HepG2 (cell line): ENCODE measurements at regions of chr16 and their contacts with region 1.

Region 1: GRCh38 chr16:14486520-14487303 is 143.3 kb downstream of the PARN start:
- DNase-seq: peak; percentile 98
- ATAC-seq: peak; percentile 95
- H3K4me3 ChIP-seq: peak overlapping the region; percentile 44 to 62 (median 49)
- H3K27ac ChIP-seq: peak overlapping the region; percentile 78
- H3K4me1 ChIP-seq: peaks cover 71% of the 10 kb centered on the region
- H3K27me3 ChIP-seq: no peaks in the 10 kb centered on the region
- CTCF ChIP-seq: peak; percentile 30; the same call in 1 of the 2 replicates
- EP300 ChIP-seq: peak in 1 of 2 experiments; percentile 74; a peak in 1 of 4 replicates
- POLR2A ChIP-seq: peak; percentile 58 to 87; a peak in 3 of 4 replicates
- RAD21 ChIP-seq: no peak; the same call in 1 of the 2 replicates

Region 2: DNA sequence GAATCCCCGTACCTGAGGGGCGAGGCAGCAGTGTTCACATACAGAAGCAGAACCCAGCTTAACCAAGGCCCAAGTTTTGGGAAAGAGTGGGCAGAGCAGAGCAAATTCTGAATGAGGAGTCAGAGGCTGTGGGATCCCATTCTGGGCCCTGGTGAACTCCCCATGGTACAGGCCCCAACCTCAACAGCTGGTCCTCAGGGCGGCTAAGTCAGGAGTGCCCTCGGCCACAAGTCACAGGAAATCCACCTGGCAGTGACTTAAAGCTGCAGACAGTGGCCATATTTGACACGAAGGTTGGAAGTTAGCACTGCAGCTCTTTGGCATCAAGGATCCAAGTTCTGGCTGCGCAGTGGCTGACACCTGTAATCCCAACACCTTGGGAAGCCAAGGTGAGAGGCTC is 93.8 kb before region 1 on chr16:
- CTCF ChIA-PET with region 1: no interaction called
- POLR2A ChIA-PET with region 1: no interaction called
- in situ Hi-C with region 1: no loop called
- intact Hi-C with region 1: no loop called
- DNase-seq: no peak
- ATAC-seq: no peak
- H3K4me3 ChIP-seq: no peak overlapping the region
- H3K27ac ChIP-seq: no peak overlapping the region
- H3K4me1 ChIP-seq: peaks cover 67% of the 10 kb centered on the region
- H3K27me3 ChIP-seq: no peaks in the 10 kb centered on the region
- CTCF ChIP-seq: no peak
- EP300 ChIP-seq: no peak
- POLR2A ChIP-seq: no peak
- RAD21 ChIP-seq: no peak

Region 3: DNA sequence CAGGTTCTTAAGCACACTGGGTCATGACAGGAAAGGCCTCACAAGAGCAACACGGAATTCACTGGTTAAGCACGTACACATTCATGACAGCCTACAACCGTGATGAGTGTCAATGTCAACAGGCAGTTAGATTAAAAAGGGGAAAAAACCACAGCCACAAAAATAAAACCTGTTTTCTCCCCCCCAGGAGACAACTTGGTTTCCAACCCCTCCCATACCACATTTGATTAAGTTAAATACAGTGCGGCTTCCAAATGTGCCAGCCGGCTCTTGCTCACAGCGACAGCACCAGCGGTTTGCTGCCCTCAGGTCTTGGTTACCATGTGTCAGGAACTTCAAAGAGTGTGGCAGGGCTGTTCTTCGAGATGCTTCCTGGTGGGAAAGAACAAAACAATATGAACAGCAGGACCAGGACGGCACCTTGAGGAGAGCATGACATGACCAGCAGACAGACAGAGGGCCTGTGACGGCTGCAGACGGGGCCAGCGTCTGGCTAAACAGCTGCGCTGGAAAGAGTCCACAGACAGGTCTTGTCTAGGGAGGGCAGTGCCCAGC is 50.2 kb before region 1 on chr16:
- CTCF ChIA-PET with region 1: no interaction called
- POLR2A ChIA-PET with region 1: no interaction called
- in situ Hi-C with region 1: no loop called
- intact Hi-C with region 1: no loop called
- DNase-seq: no peak
- ATAC-seq: no peak
- H3K4me3 ChIP-seq: no peak overlapping the region
- H3K27ac ChIP-seq: no peak overlapping the region
- H3K4me1 ChIP-seq: no peaks in the 10 kb centered on the region
- H3K27me3 ChIP-seq: no peaks in the 10 kb centered on the region
- CTCF ChIP-seq: no peak
- EP300 ChIP-seq: no peak
- POLR2A ChIP-seq: no peak
- RAD21 ChIP-seq: no peak

Region 4: DNA sequence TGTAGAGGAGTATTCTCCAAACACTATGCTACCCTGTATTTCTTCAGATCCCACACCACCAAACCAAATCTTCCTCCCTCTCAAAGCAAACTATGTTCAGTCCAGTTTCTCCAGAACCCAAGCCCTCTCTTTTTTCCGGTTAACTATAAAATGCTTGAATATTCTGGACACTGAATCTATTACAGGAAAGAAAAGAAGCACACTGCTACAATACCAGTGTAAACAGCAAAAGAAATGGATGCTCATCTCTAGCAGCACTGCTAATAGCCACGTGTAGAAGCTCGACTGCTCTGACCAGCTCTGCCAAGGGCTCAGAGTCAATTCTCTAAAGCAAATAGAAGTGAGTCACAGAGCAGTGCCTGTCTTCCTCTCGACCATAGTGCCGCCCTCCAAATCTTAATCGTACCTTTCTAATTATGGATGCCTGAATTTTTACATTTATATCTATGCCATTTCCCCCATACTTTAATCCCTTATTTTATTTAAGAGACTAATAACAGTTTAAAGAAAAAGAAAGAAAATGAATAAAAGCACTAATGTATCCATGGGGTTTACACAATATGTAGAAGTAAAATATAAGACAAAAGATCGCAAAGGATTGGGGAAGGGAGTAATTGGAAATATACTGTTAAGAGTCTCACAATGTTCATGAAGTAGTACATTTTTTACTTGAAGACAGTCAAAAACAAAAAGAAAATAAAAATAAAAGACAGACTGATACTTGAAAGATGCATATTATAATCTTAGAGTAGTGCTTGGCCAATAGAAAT is 11.2 kb before region 1 on chr16:
- CTCF ChIA-PET with region 1: no interaction called
- POLR2A ChIA-PET with region 1: interaction called, 18 read pairs
- in situ Hi-C with region 1: no loop called
- intact Hi-C with region 1: loop called (anchors 1 kb)
- DNase-seq: peak; percentile 91
- ATAC-seq: peak; percentile 99
- H3K4me3 ChIP-seq: no peak overlapping the region; a peak in 1 of 6 replicates
- H3K27ac ChIP-seq: peak overlapping the region; percentile 58
- H3K4me1 ChIP-seq: peaks cover 51% of the 10 kb centered on the region
- H3K27me3 ChIP-seq: no peaks in the 10 kb centered on the region
- CTCF ChIP-seq: no peak
- EP300 ChIP-seq: peak in 1 of 2 experiments; percentile 39; a peak in 1 of 4 replicates
- POLR2A ChIP-seq: peak in 1 of 2 experiments; percentile 31; a peak in 1 of 4 replicates
- RAD21 ChIP-seq: peak; percentile 21; the same call in 1 of the 2 replicates

Region 5: DNA sequence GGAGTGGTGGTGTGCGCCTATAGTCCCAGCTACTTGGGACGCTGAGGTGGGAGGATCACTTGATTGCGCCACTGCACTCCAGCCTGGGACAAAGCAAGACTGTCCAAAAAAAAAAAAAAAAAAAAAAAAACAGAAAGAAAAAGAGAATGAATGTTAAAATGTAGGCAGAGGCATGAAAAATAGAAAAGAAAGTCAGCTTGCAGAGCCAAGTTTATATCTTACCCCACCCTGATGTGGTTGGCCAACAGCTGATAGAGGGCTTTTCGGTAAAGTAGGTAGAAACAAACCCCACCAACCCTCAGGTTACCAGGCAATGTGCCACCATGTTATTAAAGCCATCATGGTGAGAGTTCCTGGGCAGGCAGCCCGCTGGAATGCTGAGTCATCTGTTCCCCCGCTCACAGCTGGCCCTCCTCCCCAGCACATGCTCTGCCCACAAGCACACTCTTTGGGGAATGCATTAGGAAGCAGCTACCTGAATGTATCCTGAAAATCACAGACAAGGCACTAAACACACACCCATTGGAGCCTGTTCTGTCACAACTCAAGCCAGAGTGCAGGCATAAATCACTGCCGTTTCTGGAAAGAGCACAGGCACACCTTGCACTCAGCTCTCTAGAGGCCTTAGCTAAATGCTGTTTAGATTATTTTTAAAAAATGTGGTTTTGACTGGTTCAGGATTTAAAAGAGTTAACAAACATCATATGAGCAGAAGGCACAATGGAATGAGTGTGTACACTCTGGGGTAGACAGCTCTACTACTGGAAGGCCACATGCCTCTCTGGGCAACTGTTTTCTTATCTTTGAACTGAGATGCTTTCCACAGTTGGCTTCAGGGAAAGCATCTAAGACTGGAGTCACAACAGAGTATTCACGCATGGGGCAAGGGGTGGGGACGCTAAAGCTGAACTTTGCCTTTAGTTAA is 14.9 kb after region 1 on chr16:
- CTCF ChIA-PET with region 1: no interaction called
- POLR2A ChIA-PET with region 1: interaction called, 36 read pairs
- in situ Hi-C with region 1: no loop called
- intact Hi-C with region 1: loop called (anchors 1 kb)
- DNase-seq: peak; percentile 92
- ATAC-seq: peak; percentile 73
- H3K4me3 ChIP-seq: peak overlapping the region in 2 of 3 experiments; percentile 6 to 40; a peak in 2 of 6 replicates
- H3K27ac ChIP-seq: peak overlapping the region; percentile 75
- H3K4me1 ChIP-seq: peaks cover 99% of the 10 kb centered on the region
- H3K27me3 ChIP-seq: no peaks in the 10 kb centered on the region
- CTCF ChIP-seq: no peak
- EP300 ChIP-seq: peak in 1 of 2 experiments; percentile 70; a peak in 2 of 4 replicates
- POLR2A ChIP-seq: 0 out of 4 replicates have a peak, but pooled peaks of 1 of the 2 experiments have one; percentile 22
- RAD21 ChIP-seq: peak; percentile 16; the same call in 1 of the 2 replicates

Region 6: GRCh38 chr16:14510939-14511799 is 24.5 kb after region 1 on chr16:
- CTCF ChIA-PET with region 1: no interaction called
- POLR2A ChIA-PET with region 1: interaction called, 17 read pairs
- in situ Hi-C with region 1: no loop called
- intact Hi-C with region 1: no loop called
- DNase-seq: peak; percentile 99
- ATAC-seq: peak; percentile 96
- H3K4me3 ChIP-seq: peak overlapping the region in 2 of 3 experiments; percentile 4 to 27; a peak in 2 of 6 replicates
- H3K27ac ChIP-seq: peak overlapping the region; percentile 84
- H3K4me1 ChIP-seq: peaks cover 43% of the 10 kb centered on the region
- H3K27me3 ChIP-seq: no peaks in the 10 kb centered on the region
- CTCF ChIP-seq: no peak
- EP300 ChIP-seq: peak; percentile 97 to 99
- POLR2A ChIP-seq: no peak
- RAD21 ChIP-seq: 0 out of 2 replicates have a peak, but pooled peaks have one; percentile 12